ENCODE measurements at regions of chr19 and their contacts with region 1.

Region 1: DNA sequence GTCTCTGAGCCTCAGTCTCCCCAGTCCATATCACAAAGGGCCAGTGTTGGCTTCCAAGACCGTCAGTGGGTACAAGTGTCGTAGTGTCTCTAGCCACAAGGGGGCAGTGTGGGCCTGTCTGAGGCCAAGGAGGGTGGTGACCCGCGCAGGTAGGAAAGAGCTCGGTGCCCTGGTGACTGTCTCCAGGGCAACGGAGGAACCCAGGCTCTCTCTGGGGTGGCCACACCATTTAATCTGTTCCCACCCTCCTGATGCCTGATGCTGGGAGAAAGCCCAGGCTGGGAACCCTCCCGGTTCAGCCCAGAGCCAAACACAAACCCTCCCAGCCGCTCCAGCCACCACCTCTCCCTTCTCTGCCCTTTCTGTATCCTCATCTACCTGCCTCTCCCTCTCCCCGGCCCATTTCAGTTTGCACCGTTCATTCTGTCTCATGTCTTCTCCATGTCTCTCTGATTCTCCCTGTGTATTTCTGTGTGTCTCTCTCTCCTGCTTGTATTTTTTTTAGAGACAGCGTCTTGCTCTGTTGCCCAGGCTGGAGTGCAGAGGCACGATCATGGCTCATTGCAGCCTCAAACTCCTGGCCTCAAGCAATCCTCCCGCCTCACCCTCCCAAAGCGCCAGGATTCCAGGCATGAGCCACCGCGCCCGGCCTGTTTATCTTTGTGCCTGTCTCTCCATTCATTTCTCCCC is 17.5 kb upstream of the MEIS3 start:
- DNase-seq: peak; percentile 86
- ATAC-seq: peak; percentile 90
- H3K4me3 Mint-ChIP-seq: no peak overlapping the region
- H3K27ac Mint-ChIP-seq: no peak overlapping the region
- H3K4me1 Mint-ChIP-seq: peaks cover 49% of the 10 kb centered on the region
- H3K27me3 Mint-ChIP-seq: peaks cover 37% of the 10 kb centered on the region

Region 2: DNA sequence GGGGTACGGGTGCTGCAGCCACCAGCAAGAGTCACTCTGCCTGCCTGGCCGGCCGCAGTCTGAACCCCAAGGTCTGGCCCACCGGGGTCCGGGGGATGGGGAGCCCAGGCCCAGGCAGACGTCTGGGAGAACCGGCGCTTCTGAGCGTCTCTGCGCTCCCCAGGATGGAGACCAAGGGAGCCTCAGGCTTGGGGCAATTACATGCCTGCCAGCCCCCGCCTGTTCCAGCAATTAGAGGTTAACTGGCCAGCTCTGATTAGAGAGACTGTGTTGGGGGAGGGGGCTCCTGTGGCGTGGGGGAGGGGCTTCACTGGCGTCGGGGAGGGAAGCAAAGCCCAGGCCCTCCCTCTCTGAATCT is 29.5 kb before region 1 on chr19:
- CTCF ChIA-PET with region 1: no interaction called
- DNase-seq: no peak
- ATAC-seq: no peak
- H3K4me3 Mint-ChIP-seq: no peak overlapping the region
- H3K27ac Mint-ChIP-seq: no peak overlapping the region
- H3K4me1 Mint-ChIP-seq: no peaks in the 10 kb centered on the region
- H3K27me3 Mint-ChIP-seq: peaks cover 40% of the 10 kb centered on the region

Region 3: DNA sequence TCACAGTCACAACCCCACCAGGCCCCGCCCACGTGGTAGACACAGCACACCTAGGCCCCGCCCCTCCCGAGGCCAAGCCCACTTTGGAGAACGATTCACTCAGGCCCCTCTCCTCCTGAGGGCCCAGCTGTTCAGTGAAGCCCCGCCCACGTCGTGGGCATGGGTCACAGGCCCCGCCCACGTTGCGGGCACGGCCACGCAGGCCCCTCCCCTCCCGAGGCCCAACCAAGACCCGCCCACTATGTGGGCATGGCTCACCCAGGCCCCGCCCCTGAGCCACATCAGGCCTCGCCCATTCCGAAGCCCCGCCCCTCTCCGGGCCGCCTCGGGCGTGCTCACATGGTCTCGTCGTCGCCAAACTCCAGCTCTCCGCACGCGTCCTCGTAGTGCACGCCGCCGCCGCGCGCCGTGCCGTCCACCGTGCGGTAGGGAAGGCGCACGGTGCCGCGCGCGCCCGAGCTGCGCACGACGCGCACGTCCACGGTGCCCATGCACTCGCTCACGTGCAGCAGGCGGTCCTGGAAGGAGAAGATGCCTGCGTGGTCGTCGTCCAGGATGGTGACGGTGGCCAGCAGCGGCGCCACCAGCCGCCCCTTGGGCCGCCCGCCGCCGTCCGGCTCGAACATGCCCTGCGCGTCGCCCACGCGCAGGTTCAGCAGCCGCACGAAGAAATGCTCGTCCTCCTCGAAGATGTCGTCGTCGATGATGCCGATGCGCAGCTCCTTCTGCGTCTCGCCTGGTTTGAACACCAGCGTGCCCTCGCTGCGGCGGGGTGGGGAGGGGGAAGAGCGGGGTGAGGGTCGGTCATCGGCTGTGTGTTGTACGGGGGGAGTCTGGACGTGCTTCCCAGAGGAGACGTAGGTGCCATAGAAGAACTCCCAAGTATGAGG is 10.9 kb after region 1 on chr19:
- CTCF ChIA-PET with region 1: interaction called, 40 read pairs
- DNase-seq: peak; percentile 76
- ATAC-seq: peak; percentile 80
- H3K4me3 Mint-ChIP-seq: peak overlapping the region; percentile 39
- H3K27ac Mint-ChIP-seq: no peak overlapping the region
- H3K4me1 Mint-ChIP-seq: peaks cover 40% of the 10 kb centered on the region
- H3K27me3 Mint-ChIP-seq: peaks cover 66% of the 10 kb centered on the region

Region 4: DNA sequence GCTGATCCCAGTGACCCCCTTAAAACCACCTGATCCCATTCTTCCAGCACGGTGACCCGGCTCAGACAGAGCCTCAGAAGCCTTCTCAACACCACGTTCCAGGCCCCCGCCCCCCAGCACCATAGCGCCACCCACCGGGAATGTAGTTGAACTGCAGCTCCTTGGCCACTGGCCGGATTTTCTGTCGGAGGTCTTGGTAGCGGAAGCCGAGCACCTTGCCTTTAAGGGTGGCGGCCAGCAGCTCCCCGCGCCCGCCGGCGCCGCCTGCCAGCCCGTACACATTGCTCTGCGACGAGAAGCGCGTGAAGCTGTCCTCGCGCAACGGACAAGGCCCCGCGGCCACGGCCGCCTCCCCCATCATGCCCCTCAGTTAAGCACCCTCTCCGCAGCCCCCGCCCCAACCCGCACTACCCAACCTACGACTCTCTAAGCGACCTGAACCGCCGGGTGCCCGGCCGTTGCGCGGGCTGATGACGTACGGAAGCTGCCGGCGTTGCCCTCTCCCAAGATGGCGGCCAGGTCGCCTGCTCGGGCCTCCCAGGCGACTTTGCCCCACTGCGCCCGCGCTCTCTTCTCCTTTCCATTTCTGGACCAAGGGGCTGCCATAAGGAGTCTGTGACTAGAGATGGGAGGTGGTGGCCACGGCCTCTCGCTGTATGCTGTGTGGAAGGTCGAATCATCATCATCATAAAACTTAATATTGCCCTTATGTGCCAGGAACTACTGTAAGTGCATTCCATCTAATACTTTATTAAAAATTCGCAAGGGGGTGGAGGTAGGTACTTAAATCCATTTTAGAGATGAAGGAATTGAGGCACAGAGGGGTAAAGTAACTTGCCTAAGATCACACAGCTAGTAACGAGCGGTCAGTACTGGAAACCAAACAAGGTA is 47.2 kb after region 1 on chr19 and contains the start of gene KPTN:
- CTCF ChIA-PET with region 1: interaction called, 62 read pairs
- DNase-seq: peak; percentile 95
- ATAC-seq: peak; percentile 92
- H3K4me3 Mint-ChIP-seq: peak within 1 kb of the TSS; percentile 87
- H3K27ac Mint-ChIP-seq: peak within 1 kb of the TSS; percentile 97
- H3K4me1 Mint-ChIP-seq: peaks cover 32% of the 10 kb centered on the region
- H3K27me3 Mint-ChIP-seq: peaks cover 2% of the 10 kb centered on the region
- total RNA-seq, gene KPTN: 11.0 to 13.3 TPM

Region 5: DNA sequence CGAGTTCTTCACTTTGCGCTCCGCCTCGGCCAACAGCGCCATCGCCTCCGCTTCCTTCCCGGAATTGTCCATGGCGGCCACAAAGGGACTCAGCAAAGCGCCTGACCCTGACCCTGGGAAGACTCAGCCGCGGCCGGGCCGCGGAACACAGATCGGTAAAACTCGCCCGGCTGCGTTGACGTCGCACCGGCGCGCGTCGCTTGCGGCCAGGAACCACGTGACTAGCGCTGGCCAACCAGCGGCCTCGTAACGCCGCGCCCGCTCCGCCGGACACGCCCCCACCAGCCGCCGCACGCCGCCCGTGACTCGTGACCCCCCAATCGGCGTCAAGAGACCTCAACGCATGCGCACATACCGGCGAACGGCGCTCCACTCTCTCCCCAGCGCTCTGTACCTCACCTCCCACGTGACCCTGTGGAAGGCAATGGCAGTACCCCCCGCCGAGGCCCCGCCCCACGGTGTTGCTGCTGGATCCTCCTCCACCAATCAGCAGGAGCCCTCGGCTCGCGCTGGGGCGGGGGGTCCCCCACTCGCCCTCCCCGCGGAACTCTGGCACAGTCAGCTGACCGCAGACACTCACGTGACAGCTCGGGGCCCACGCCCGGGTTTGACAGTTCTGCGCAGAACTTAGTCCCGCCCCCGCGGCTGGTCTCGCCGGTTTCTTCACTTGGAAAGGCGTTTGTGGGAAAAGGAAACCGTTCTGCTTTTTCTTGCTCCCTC is 78.2 kb after region 1 on chr19 and contains the start of gene NAPA:
- CTCF ChIA-PET with region 1: interaction called, 30 read pairs
- DNase-seq: peak; percentile 100
- ATAC-seq: peak; percentile 97
- H3K4me3 Mint-ChIP-seq: peak within 1 kb of the TSS; percentile 100
- H3K27ac Mint-ChIP-seq: peak within 1 kb of the TSS; percentile 99
- H3K4me1 Mint-ChIP-seq: peaks cover 80% of the 10 kb centered on the region
- H3K27me3 Mint-ChIP-seq: no peaks in the 10 kb centered on the region
- total RNA-seq, gene NAPA: 102 to 124 TPM

Region 6: GRCh38 chr19:47600246-47601179 is 163.7 kb after region 1 on chr19:
- CTCF ChIA-PET with region 1: interaction called, 10 read pairs
- DNase-seq: peak; percentile 100
- ATAC-seq: peak; percentile 95
- H3K4me3 Mint-ChIP-seq: peak overlapping the region; percentile 78
- H3K27ac Mint-ChIP-seq: peak overlapping the region; percentile 91
- H3K4me1 Mint-ChIP-seq: peaks cover 46% of the 10 kb centered on the region
- H3K27me3 Mint-ChIP-seq: peaks cover 4% of the 10 kb centered on the region

Region 7: DNA sequence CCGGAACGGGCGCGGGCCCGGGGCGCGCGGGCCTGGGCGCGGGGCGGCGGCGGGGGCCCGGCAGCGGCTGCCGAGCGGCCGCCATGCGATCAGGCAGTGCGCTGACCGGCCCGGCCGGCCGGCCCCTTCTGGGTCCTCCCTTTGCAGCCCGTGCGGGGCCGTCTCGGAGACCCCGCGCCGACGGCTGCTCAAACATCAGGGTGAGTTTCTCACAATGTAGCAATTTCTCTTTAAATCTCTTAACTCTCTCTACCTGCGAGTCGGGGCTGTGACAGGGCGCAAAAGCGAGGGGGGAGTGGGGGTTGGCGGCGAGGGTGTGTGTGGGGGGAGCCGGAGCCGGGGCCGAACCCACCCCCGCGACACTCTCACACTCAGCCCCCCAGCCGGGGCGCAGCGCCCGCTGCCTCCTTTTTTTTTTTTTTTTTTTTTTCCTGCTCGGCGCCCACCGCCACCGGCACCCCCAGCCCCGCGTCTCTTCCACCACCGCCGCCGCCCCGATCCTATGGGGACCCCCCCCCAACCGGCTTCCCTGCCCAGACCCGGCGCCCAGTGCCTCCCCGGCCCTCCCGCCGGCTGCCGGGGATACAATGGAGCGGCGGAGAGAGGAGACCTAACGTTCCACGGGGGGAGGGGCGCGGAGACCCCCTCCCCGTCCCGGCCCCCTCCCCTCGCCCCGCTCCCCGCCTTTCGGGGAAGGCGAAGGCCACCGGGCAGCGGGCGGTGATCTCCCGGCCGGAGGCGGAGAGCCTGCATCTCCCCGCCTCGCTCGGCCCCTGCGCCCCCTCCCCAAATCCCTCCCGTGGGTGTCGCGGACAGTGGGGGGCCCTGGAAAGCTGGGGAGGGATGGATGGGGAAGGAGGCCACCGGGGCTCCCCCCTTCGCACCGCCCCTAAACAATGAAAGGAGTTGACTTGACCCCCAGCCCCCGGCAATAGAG is 172.4 kb after region 1 on chr19 and contains the start of gene BICRA:
- CTCF ChIA-PET with region 1: interaction called, 11 read pairs
- DNase-seq: peak; percentile 86
- ATAC-seq: peak; percentile 67
- H3K4me3 Mint-ChIP-seq: peak within 1 kb of the TSS; percentile 88
- H3K27ac Mint-ChIP-seq: peak within 1 kb of the TSS; percentile 92
- H3K4me1 Mint-ChIP-seq: peaks cover 25% of the 10 kb centered on the region
- H3K27me3 Mint-ChIP-seq: no peaks in the 10 kb centered on the region
- total RNA-seq, gene BICRA: 16.6 to 20.7 TPM